MCF 10A (cell line): ENCODE measurements at regions of chr6 and their contacts with region 1.

Region 1: DNA sequence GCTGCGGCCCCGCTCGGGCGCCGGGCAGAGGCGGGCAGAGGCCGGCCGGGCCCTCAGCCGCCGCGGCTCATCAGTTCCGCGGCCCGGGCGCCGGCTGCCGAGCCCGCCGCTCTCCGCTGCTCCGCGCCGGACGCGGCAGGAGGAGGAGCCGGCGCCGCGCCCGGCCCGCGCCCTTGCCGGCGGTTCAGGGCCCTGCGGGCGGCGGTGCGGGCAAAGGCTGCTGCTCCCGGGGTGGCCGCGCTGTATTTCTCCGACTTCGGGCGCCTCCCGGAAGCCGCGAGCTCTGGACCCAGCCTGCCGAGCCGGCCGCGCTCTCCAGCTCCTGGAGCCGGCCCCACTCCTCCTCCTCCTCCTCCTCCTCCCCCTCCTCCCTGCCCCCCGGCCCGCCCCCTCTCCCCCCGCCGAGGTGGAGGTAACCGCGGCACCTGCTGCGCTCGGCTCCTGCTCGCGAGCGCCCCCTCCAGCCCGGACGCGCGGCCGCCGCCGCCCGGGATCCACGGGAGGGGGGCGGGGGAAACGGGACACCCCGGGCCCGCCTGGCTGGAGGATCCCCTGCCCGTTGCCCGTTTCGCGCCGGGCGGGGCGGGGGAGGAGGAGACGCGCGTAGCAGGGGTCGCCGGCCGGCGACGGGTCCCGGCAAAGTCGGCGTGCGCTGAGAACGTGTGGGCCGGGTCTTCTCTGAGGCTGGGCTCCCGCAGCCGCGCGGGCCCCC is at the start of gene SLC22A23:
- DNase-seq: peak; percentile 69
- H3K4me3 Mint-ChIP-seq: peak within 1 kb of the TSS; percentile 75
- H3K27ac Mint-ChIP-seq: no peak within 1 kb of the TSS
- H3K4me1 Mint-ChIP-seq: peaks cover 7% of the 10 kb centered on the region
- H3K27me3 Mint-ChIP-seq: no peaks in the 10 kb centered on the region
- CTCF ChIP-seq: peak; percentile 79
- total RNA-seq, gene SLC22A23: 11.5 and 11.9 TPM in 2 replicates

Region 2: DNA sequence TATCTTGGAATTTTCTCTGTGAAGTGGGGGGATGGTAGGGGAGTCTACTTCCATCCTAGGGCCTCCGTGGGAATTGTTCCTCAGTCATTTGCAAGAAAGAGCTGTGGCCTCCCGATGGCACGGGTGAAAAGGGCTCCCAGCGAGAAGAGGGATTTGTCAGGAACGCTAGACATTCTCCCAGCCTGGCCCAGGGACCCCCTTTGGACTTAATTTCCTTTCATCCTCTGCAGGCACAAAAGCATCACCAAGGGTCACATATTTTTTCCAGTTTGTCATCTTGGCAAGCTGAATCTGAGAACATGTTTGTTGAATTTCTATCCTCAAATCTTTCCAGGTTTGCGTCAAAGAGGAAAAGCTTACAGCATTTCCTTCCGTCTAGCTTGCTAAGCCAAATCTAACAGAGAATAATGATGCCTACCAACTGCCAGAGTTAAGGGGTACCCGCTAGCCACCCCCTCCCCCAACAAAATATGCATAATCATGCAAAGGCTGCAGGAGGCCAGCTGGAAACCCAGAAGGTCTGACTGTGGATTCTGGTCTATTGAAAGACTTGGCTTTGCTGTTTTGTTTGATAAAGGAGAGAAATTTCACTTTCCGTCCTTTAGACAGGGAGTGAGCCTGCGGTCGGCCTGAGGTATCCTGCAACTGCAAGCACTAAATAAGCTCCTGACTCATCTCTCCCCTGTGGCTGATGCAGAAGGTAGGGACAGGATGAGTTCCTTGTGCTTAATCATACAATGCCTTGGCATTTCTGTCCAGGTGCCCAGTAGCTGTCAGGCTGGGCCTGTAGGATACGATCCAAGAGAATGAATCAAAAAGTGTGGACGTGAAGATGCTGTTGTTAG is 175.1 kb before region 1 on chr6:
- CTCF ChIA-PET with region 1: interaction called, 7 read pairs
- POLR2A ChIA-PET with region 1: interaction called, 27 read pairs
- intact Hi-C with region 1: loop called (anchors 1 kb)
- DNase-seq: peak; percentile 94
- H3K4me3 Mint-ChIP-seq: no peak overlapping the region
- H3K27ac Mint-ChIP-seq: no peak overlapping the region
- H3K4me1 Mint-ChIP-seq: peaks cover 11% of the 10 kb centered on the region
- H3K27me3 Mint-ChIP-seq: no peaks in the 10 kb centered on the region
- CTCF ChIP-seq: no peak

Region 3: DNA sequence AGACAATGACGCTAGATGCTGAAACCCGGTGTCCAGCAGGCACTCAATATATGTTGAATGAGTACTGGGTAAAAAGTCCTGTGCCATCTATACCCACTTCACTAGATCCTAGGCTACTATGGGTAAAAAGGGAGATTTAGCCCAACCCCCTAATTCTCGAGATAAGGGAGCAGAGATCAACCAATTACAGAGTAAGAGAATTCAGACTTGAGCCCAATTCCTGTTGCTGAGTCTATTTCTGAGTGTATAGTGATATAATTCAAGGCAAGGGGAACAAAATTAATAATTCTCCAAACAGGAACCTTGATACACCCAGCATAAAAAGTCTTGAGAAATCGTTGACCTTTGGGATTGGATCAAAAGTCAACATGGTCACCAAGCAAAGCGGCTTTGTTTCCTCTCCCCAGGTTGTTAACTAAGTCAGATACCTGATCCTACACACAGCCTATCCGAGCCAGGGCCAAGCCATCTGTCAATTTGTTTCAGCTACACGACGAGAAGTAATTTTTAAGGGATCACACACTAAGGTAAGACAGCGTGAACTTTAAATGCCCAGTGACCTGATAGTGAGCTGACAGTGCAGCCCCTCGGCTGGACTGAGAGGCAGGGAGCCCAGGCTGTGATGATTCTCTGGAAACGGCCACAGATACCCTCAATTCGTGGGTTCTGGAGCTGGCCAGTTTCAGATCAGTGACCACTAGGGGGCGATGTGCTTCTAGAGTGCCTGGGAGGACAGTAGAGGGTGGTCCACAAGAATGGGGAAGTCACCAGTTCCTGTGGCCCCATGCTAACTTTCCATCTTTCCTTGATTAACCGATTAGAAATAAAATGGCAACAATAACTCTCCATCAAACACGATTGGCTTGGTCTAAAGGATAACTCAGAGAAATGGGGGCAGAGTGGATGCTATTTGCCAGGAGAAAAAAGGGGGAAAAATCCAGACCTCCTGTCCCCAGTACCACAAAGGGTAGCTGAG is 46.2 kb before region 1 on chr6:
- CTCF ChIA-PET with region 1: interaction called, 5 read pairs
- POLR2A ChIA-PET with region 1: interaction called, 9 read pairs
- intact Hi-C with region 1: loop called (anchors 2 kb)
- DNase-seq: peak; percentile 71
- H3K4me3 Mint-ChIP-seq: no peak overlapping the region
- H3K27ac Mint-ChIP-seq: no peak overlapping the region
- H3K4me1 Mint-ChIP-seq: peaks cover 13% of the 10 kb centered on the region
- H3K27me3 Mint-ChIP-seq: no peaks in the 10 kb centered on the region
- CTCF ChIP-seq: peak; percentile 64

Region 4: GRCh38 chr6:3471711-3472110 is 14.8 kb after region 1 on chr6:
- CTCF ChIA-PET with region 1: interaction called, 7 read pairs
- POLR2A ChIA-PET with region 1: interaction called, 32 read pairs
- intact Hi-C with region 1: no loop called
- DNase-seq: no peak
- H3K4me3 Mint-ChIP-seq: no peak overlapping the region
- H3K27ac Mint-ChIP-seq: no peak overlapping the region
- H3K4me1 Mint-ChIP-seq: peaks cover 12% of the 10 kb centered on the region
- H3K27me3 Mint-ChIP-seq: no peaks in the 10 kb centered on the region
- CTCF ChIP-seq: no peak

Region 5: DNA sequence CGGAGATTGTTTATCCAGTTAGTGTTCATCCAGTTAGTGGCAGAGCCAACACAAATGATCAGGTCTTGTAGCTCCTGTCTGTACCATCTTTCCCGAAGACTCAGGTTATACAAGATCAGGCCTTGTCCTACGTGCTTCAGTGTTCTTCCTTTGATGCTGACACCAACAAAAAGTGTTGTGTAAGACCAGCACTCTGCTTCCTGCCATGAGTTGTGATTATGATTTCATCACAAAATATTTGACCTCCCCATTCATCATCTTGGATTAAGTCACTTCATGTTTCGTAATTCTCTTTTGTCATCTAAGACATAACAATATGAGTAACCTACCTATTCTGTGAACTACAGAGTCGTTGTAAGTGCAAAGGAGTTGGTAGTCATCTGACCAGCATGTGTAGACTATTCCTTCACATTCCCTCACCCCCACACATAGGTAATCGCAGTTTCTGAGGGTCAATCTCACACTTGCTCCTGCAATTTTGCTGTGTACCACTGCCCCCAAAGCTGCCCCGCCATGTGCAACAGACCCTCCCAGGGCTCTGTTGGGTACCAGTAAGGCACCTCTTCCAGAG is 135.5 kb after region 1 on chr6:
- CTCF ChIA-PET with region 1: no interaction called
- POLR2A ChIA-PET with region 1: interaction called, 5 read pairs
- intact Hi-C with region 1: loop called (anchors 2 kb)
- DNase-seq: peak; percentile 99
- H3K4me3 Mint-ChIP-seq: no peak overlapping the region
- H3K27ac Mint-ChIP-seq: peak overlapping the region; percentile 69
- H3K4me1 Mint-ChIP-seq: peaks cover 17% of the 10 kb centered on the region
- H3K27me3 Mint-ChIP-seq: no peaks in the 10 kb centered on the region
- CTCF ChIP-seq: no peak